PC-3 (cell line): ENCODE measurements at regions of chr11 and their contacts with region 1.

Region 1: GRCh38 chr11:17598700-17599459 is 51.8 kb downstream of the OTOG start:
- DNase-seq: peak; percentile 78
- ATAC-seq: peak; percentile 89
- H3K4me3 ChIP-seq: no peak overlapping the region
- H3K27ac ChIP-seq: no peak overlapping the region
- H3K4me1 ChIP-seq: no peaks in the 10 kb centered on the region
- H3K27me3 ChIP-seq: peaks cover 8% of the 10 kb centered on the region; the same call in 1 of the 2 replicates
- CTCF ChIP-seq: peak; percentile 90

Region 2: DNA sequence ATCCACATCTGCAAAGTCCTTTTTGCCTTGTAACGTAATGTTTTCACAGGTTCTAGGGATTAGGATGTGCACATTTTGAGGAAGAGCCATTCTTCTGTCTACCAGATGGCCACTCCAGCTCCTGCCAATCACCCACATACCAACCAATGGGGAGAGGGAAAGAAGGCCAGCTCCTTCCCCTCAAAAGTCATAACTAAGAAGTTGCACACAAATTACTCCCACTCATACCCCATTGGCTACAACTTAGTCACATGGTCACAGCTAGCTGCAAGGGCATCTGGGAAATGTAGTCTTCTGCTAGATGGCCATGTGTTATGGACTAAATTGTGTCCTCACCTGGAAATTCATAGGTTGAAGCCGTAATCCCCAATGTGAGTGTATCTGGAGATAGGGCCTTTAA is 105.1 kb after region 1 on chr11:
- CTCF ChIA-PET with region 1: no interaction called
- POLR2A ChIA-PET with region 1: no interaction called
- intact Hi-C with region 1: no loop called
- DNase-seq: peak; percentile 29
- ATAC-seq: peak; percentile 29; the same call in 1 of the 2 replicates
- H3K4me3 ChIP-seq: no peak overlapping the region
- H3K27ac ChIP-seq: no peak overlapping the region
- H3K4me1 ChIP-seq: no peaks in the 10 kb centered on the region
- H3K27me3 ChIP-seq: no peaks in the 10 kb centered on the region
- CTCF ChIP-seq: no peak

Region 3: DNA sequence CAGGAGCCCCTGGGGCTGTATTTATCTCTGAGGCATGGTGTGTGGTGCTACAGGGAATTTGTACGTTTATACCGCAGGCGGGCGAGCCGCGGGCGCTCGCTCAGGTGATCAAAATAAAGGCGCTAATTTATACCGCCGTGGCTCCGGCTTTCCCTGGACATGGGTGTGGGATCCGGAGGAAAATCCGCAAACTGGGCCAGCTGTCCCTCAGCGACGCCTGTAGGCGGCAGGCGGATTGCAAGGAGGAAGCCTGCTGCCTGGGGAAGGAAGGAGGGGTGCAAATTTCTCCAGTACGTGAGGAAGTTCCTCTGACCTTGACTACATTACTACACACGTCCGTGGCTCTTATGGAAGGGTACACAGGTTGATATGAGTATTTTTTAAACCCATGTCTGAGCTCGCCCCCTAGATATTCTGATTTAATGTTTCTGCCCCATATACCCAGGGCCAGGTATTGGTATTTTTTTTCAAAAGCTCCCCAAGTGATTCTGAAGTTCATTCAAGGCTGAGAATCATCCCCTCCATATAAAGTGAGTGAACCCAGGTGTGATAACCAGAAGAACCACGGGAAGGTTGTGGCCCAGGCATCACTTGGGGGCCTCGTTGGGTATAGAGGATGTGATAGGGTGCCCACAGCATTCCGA is 123.2 kb after region 1 on chr11:
- CTCF ChIA-PET with region 1: no interaction called
- POLR2A ChIA-PET with region 1: no interaction called
- intact Hi-C with region 1: loop called (anchors 2 kb)
- DNase-seq: peak; percentile 60
- ATAC-seq: peak; percentile 63
- H3K4me3 ChIP-seq: no peak overlapping the region
- H3K27ac ChIP-seq: no peak overlapping the region
- H3K4me1 ChIP-seq: no peaks in the 10 kb centered on the region
- H3K27me3 ChIP-seq: peaks cover 49% of the 10 kb centered on the region
- CTCF ChIP-seq: peak; percentile 61